ENCODE measurements at regions of chr1 and their contacts with region 1.

Region 1: DNA sequence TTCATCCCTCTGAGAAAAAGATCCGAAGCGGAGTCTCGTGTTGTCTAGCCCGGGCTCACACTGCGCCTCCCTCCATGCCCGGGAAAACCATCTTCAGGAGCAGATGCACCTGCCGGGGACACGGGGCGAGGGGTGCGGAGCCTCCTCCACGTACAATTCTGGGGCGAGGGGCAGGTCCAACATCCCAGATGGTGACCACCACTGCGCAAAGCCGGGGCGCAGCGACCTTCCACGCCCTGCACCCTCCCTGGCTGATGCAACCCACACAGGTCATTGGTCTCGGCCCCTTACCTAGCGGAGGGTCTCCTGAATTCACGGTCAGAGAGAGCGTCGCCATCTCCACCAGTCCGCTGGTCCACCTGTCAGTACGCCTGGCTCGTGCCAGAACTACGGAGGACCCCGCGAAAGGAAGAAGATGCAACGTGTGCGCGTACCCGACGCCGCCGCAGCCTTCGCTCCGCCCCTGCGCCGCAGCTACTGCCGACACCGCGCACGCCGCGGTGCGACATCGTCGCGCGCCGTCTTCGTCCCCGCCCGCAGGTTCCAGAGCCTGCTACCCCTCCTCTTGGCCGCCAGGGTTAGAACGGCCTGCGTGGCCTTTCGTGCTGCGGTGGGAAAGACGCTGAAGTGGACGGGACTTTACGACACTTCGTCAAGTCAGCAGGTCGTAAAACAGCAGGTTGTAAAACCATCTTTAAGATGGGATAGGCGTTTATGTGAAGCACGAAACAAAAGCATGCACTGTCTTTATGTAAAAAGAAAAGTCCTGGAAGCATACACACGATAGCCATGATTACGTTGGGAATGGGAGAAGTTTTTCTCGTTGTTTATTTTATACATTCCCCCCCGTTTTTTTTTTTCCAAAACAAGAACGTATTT is at the start of gene EPRS1:
- DNase-seq: peak; percentile 98
- total RNA-seq, gene EPRS1: 62.0 TPM

Region 2: GRCh38 chr1:220089650-220090556 is 43.6 kb after region 1 on chr1 and contains the start of gene BPNT1:
- intact Hi-C with region 1: loop called (anchors 5 kb)
- DNase-seq: peak; percentile 97
- total RNA-seq, gene BPNT1: 16.2 TPM

Region 3: DNA sequence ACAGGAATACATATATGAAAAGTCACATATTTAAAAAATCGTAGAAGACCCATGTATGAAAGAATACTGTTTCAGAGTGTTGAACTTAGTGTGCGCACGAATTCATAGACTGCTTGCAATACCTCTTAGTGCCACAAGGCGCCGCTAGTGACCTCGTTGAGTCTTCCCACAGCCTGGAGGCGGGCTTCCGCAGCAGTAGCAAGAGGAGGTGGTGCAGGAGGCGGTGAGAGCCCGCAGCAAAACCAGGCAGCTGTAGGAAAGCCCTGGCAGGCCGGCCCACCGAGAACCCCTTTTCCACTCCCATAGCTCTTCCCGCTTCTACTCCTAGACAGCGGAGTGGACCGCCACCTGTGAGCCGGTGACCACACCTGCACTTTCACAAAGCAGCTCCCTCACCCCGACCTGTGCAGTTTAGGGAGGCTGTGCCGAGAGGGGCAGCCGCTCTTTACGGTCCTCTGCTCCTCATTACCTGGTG is 763.9 kb after region 1 on chr1:
- intact Hi-C with region 1: no loop called
- DNase-seq: peak; percentile 92

Measured in cardiac septum (tissue), 1 donor.